ENCODE measurements at regions of chr7 and their contacts with region 1.

Region 1: DNA sequence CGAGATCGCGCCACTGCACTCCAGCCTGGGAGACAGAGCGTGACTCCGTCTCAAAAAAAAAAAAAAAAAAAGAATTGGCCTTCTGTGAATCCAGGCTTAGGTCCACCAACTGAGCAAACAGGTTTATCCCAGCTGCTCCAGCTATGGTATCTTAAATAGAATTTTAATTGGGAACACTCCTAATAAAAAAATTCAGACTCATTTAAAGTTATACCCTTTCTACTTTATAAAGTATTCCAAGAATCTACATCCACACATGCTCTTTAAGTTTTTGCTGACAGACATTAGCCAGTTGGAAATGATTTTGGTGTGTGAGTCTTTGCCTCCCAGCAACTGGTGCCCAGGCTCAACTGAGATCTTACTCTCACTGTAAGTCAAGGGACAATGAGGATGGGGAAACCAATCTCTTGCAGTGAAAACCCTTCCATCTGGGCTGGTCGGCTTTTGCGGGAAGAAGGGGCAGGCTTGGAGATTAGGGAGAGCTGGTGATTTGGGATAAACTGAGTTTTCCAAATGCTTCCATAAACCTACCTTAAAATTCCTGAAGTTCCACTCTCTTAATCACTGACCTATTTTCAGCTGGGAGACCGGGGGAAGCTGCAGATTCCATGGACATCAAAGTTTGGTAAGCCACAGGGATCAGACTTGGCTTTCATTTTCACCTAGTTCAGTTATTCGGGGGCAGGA is 89.2 kb upstream of the ZNF746 start:
- DNase-seq: no peak
- ATAC-seq: no peak
- H3K4me3 ChIP-seq: no peak overlapping the region
- H3K4me3 Mint-ChIP-seq: no peak overlapping the region
- H3K27ac ChIP-seq: no peak overlapping the region
- H3K27ac Mint-ChIP-seq: no peak overlapping the region
- H3K4me1 ChIP-seq: no peaks in the 10 kb centered on the region
- H3K4me1 Mint-ChIP-seq: peaks cover 10 to 27% (median 17%) of the 10 kb centered on the region in 7 donors
- H3K27me3 ChIP-seq: no peaks in the 10 kb centered on the region
- H3K27me3 Mint-ChIP-seq: no peaks in the 10 kb centered on the region

Region 2: GRCh38 chr7:149598721-149599306 is 12.0 kb after region 1 on chr7:
- CTCF ChIA-PET with region 1: no interaction called
- POLR2A ChIA-PET with region 1: no interaction called
- intact Hi-C with region 1: loop called in 1 of 2 experiments (anchors 1 kb)
- DNase-seq: peak in 1 of 9 donors; percentile 30
- ATAC-seq: no peak
- H3K4me3 ChIP-seq: no peak overlapping the region
- H3K4me3 Mint-ChIP-seq: peak overlapping the region in 7 of 10 donors; percentile 18 to 84 (median 77)
- H3K27ac ChIP-seq: no peak overlapping the region
- H3K27ac Mint-ChIP-seq: peak overlapping the region in 7 of 9 donors; percentile 78 to 94 (median 88)
- H3K4me1 ChIP-seq: peaks cover 18 to 22% of the 10 kb centered on the region in 2 donors
- H3K4me1 Mint-ChIP-seq: peaks cover 30 to 50% (median 42%) of the 10 kb centered on the region in 7 donors
- H3K27me3 ChIP-seq: no peaks in the 10 kb centered on the region
- H3K27me3 Mint-ChIP-seq: peaks cover 0 to 9% (median 0%) of the 10 kb centered on the region in 5 donors

Region 3: DNA sequence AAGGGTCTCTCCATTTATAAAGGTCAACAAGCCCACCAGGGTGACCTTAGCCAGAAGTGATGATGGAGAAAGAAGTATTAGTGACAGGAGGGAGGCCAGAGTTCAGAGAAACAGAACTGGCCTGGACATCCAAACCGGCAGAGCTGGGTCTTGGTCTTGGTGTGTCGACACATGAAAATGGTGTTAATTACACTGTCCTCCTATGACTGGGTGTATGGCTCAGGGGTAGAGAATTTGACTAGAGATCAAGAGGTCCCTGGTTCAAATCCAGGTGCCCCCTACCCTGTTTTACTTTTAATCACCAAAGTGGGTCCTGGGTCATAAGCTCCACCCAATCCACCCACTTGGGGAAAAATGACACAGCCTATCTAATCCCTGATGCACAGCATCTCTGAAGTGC is 21.4 kb after region 1 on chr7:
- CTCF ChIA-PET with region 1: no interaction called
- POLR2A ChIA-PET with region 1: no interaction called
- intact Hi-C with region 1: loop called in 1 of 2 experiments (anchors 1 kb)
- DNase-seq: no peak
- ATAC-seq: no peak
- H3K4me3 ChIP-seq: no peak overlapping the region
- H3K4me3 Mint-ChIP-seq: no peak overlapping the region
- H3K27ac ChIP-seq: no peak overlapping the region
- H3K27ac Mint-ChIP-seq: no peak overlapping the region
- H3K4me1 ChIP-seq: no peaks in the 10 kb centered on the region
- H3K4me1 Mint-ChIP-seq: peaks cover 0 to 11% (median 0%) of the 10 kb centered on the region in 7 donors
- H3K27me3 ChIP-seq: no peaks in the 10 kb centered on the region
- H3K27me3 Mint-ChIP-seq: peaks cover 0 to under 1% (median 0%) of the 10 kb centered on the region in 5 donors

Measured in naive thymus-derived CD4-positive, alpha-beta T cell (primary cell).